ENCODE measurements at regions of chr19 and their contacts with region 1.

Region 1: DNA sequence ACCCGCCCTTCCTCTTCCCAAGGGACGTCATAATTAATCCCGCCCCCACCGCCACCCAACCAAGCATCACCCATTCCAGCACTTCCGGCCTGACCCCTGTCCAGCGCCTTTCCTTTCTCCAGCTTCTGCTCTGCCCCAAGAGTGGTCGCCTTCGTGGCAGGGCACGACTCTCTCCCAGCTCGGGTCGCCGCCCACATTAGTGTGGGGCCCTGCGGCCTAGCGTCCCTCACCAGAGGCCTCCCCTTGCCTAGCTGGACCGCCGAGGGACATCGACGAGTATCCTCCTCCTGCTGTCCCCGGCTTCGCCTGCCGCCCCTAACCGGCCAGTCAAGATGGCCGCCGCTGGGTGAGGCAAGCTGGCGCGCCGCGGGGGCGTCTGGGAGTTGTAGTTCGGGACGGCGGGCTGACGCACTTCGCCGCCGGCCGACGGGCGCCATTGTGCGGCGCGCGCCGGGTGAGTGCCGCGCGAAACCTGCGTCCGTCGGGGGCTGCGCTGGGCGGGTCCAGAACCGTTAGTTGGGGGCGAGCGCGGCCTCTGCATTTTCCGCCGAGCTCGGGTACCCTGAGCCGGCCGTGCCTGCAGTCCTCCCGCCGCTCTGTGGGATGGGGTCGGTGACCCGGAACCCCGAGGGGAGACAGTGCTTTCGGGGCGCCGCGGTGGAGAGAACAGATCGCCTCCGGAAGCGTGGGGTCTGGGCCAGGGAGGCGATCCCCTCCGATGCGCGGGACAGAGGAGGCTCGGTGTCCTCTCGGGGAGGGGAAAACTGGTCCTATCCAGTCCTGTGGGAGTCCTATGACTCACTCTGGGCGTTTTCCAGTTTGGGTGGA is at the start of gene ZNF274:
- DNase-seq: peak; percentile 90
- H3K4me3 Mint-ChIP-seq: peak within 1 kb of the TSS; percentile 93
- H3K27ac Mint-ChIP-seq: peak within 1 kb of the TSS; percentile 99
- H3K4me1 Mint-ChIP-seq: peaks cover 16% of the 10 kb centered on the region
- H3K27me3 Mint-ChIP-seq: no peaks in the 10 kb centered on the region
- total RNA-seq, gene ZNF274: 18.2 and 21.2 TPM in 2 replicates

Region 2: DNA sequence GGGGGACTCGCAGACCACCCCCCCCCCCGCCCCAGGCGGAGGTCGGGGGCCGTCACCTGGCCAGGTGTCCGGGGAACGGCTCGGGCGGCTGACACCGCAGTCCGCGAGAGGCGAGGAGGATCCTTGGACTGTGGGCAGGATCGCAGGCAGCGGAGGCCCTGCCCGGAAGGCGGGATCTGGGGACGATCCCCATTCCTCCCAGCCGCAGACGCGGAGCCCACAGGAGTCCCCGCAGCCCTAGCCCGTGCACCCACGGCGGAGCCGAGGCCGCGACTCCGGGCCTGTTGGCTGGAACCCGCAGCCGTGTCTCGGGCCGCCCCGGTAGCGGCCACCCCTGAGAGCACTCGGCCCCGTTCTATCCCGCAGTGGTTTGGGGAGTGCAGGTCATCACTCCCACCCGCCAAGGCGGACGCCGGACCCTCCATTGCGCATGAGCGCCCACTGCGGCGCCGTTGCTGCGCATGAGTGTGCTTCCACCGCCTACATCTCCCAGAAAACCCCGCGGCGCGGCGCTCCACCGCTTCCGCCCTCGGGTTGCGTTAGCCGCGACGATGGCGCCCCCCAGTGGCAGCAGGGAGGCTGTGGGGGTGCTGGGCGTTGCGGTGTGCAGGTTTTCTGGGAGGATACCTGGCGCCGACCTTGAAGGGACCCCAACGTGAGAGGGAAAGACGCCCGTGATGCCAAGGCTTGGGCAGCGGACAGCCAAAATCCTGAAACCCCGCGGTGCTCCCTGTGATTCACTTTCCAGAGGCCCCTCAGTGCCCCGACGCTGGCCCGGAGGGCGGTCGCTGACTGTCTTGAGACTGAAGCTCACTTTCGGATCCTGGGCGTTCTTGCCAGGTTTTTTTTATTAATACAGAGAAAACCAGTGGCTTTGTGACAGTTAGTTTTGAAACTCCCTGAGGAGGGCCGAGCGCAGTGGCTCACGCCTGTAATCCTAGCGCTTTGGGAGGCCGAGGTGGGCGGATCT is 28.2 kb before region 1 on chr19:
- intact Hi-C with region 1: loop called (anchors 2 kb)
- DNase-seq: peak; percentile 89
- H3K4me3 Mint-ChIP-seq: peak overlapping the region; percentile 76
- H3K27ac Mint-ChIP-seq: peak overlapping the region; percentile 55
- H3K4me1 Mint-ChIP-seq: peaks cover 4% of the 10 kb centered on the region
- H3K27me3 Mint-ChIP-seq: no peaks in the 10 kb centered on the region

Region 3: DNA sequence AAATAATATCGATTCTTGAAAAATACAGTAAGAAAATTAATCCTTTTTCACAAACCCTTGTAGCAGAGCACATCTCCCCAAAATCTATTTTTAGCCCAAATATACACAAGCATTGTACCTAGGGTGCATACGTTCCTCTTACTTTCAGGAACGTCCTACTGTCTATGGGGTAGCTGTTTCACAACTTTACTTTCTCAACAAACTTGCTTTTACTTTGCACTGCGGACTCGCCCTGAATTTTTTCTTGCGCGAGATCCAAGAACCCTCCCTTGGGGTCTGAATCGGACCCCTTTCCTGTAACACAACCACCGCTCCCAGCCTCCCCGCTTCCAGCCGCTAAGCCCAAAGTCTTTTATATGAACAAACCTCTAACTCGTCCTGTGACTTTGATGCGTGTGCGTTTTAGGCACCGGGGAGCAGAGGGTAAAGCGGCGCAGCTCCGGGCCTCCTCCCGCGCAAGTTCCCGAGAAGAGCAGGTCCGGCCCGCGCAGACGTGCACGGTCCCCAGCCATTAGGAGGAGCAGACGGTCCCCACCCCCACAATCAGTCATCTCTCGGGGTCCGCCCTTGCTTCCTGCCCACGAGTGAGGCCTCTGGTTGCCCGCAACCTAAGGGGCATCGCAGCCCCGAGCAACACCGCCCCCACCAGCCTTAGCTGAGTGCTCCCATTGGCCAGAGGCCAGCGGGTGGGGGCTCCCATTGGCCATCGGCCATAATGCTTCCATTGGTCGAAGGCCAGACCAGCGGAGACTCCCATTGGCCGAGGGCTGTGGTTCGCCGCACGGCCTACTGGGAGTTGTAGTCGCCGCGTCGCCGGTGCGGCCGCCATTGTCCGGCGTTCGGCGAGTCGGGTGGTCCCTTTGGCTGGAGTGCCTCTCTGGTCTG is 95.2 kb after region 1 on chr19 and contains the start of gene ZNF8:
- intact Hi-C with region 1: loop called (anchors 1 kb)
- DNase-seq: peak; percentile 97
- H3K4me3 Mint-ChIP-seq: peak within 1 kb of the TSS; percentile 92
- H3K27ac Mint-ChIP-seq: peak within 1 kb of the TSS; percentile 93
- H3K4me1 Mint-ChIP-seq: peaks cover 23% of the 10 kb centered on the region
- H3K27me3 Mint-ChIP-seq: no peaks in the 10 kb centered on the region
- total RNA-seq, gene ZNF8: 4.0 and 4.4 TPM in 2 replicates

Region 4: GRCh38 chr19:58386576-58387337 is 203.6 kb after region 1 on chr19 and contains the start of gene RPS5:
- intact Hi-C with region 1: loop called (anchors 1 kb)
- DNase-seq: peak; percentile 95
- H3K4me3 Mint-ChIP-seq: peak within 1 kb of the TSS; percentile 93
- H3K27ac Mint-ChIP-seq: peak within 1 kb of the TSS; percentile 99
- H3K4me1 Mint-ChIP-seq: peaks cover 35% of the 10 kb centered on the region
- H3K27me3 Mint-ChIP-seq: no peaks in the 10 kb centered on the region
- total RNA-seq, gene RPS5: 1,157 and 1,161 TPM in 2 replicates

Region 5: DNA sequence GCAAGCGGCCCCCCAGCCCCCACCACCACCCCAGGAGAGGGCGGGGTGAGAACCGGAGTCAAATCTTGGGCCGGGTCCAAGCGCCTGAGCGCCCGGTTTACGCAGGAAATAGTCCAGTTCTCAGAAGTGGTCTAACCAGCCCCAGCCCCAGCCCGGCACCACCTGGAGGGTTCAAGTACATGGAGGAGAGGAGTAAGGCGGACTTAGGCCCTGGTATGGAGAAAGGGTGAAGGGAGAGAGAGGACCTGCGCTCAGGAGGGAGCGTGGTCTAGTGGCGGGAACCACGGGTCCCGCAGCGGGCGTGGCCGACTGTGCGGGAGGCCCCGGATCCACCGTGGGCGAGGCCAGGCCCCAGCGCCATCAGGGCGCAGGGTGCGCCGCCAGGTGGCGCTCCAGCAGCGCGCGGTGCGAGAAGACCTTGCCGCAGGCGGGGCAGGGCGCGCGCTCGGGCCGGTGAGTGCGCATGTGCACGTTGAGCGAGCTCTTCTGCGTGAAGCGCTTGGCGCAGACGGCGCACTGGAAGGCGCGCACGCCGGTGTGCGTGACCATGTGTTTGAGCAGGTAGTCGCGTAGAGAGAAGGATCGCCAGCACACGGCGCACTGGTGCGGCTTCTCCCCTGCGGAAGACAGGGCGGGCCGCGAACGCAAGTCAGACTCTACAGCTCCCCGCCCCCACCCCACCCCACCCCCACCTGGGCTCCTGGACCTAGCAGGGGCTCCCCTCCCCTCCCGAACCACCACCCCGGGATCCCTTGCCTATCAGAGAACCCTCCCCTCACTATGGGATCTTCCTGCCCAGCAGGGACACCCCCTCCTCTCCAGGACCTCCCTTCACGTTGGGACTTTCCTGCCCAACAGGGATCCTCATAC is 330.7 kb after region 1 on chr19:
- intact Hi-C with region 1: no loop called
- DNase-seq: peak; percentile 96
- H3K4me3 Mint-ChIP-seq: peak overlapping the region; percentile 91
- H3K27ac Mint-ChIP-seq: peak overlapping the region; percentile 96
- H3K4me1 Mint-ChIP-seq: peaks cover 20% of the 10 kb centered on the region
- H3K27me3 Mint-ChIP-seq: peaks cover 3% of the 10 kb centered on the region